Ascending aorta (tissue), 2 donors: ENCODE measurements at regions of chr2 and their contacts with region 1.

Region 1: DNA sequence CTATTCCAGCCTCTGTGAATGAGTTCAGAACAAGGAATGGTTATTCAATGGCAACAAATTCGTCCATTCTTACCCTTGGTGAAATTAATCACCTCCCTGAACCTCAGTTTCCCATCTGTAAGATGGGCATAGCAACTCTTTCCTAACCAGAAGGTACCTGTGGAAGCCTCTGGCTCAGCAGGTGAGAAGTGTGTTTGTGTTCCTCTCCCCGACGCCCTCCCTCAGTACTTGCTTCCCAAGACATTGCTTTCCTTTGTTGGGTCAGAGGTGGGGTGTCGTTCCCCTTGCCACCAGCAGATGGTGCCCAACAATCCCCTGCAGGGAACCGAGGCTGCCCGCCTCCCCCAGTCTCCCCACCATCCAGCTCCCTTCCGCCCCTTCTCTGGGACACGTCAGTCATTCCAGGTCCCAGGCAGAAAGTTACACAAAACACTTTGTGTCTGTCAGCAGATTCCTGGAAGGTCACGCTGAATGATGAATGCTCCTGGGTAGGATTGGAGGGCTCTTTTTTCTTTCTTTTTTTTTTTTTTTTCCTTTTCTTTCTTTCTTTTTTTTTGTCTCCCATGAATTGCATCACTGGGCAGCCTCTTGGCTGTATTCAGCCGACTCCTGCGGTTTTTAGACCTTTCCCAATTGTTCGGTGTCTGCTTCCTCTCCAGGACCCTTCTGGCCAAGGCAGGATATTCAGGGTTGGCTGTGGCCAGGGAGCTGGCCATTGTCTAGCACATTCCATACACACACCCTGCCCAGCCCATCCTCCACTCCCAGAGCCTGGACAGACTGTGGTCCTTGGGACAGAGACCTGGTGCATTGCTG is 117.3 kb downstream of the LPIN1 start:
- DNase-seq: peak; percentile 63 to 94
- H3K4me3 ChIP-seq: peak overlapping the region; percentile 7 to 39
- H3K27ac ChIP-seq: peak overlapping the region in 1 of 2 donors; percentile 43
- H3K4me1 ChIP-seq: peaks cover 0 to 6% of the 10 kb centered on the region in 2 donors
- H3K27me3 ChIP-seq: no peaks in the 10 kb centered on the region
- CTCF ChIP-seq: peak; percentile 82 to 93 (median 91)

Region 2: GRCh38 chr2:11505652-11506610 is 357.8 kb before region 1 on chr2:
- intact Hi-C with region 1: no loop called
- DNase-seq: no peak
- H3K4me3 ChIP-seq: no peak overlapping the region
- H3K27ac ChIP-seq: no peak overlapping the region
- H3K4me1 ChIP-seq: no peaks in the 10 kb centered on the region
- H3K27me3 ChIP-seq: no peaks in the 10 kb centered on the region
- CTCF ChIP-seq: no peak

Region 3: GRCh38 chr2:11829947-11830707 is 33.6 kb before region 1 on chr2:
- intact Hi-C with region 1: loop called (anchors 1 kb)
- DNase-seq: peak; percentile 24 to 82
- H3K4me3 ChIP-seq: peak overlapping the region; percentile 55
- H3K27ac ChIP-seq: peak overlapping the region; percentile 69 to 89
- H3K4me1 ChIP-seq: peaks cover 4 to 17% of the 10 kb centered on the region in 2 donors
- H3K27me3 ChIP-seq: no peaks in the 10 kb centered on the region
- CTCF ChIP-seq: peak in 1 of 3 experiments; percentile 35

Region 4: DNA sequence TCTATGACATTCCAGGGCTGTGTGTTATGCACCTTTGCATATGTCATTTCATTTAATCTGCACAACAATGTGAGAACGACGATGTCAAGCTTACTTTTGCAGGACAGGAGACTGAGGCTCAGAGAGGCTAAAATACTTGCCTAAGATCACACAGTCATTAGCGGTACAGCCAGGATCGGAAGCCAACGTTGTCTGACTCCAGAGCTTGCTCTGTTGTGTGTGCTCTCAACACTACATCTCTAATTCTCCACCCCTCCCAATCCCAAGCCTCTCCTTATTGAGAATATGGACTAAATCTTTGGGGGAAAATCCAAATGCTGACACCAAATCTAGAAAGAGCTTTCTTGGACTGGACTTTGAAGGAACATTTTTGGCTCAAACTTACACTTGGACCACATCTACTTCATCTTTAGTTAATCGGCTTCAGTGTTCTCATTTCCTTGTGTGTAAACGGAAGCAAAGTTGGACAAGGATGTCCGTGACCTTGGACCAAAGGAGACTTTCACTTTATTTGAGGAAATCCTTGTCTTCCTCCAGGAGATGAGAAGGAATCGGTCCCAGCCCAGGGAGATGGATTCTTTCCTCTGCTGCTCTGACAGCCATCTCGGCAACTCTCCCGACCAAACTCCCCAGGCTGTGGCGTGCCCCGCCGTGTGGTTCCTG is 125.1 kb after region 1 on chr2:
- intact Hi-C with region 1: no loop called
- DNase-seq: no peak
- H3K4me3 ChIP-seq: no peak overlapping the region
- H3K27ac ChIP-seq: no peak overlapping the region
- H3K4me1 ChIP-seq: no peaks in the 10 kb centered on the region
- H3K27me3 ChIP-seq: no peaks in the 10 kb centered on the region
- CTCF ChIP-seq: no peak

Region 5: DNA sequence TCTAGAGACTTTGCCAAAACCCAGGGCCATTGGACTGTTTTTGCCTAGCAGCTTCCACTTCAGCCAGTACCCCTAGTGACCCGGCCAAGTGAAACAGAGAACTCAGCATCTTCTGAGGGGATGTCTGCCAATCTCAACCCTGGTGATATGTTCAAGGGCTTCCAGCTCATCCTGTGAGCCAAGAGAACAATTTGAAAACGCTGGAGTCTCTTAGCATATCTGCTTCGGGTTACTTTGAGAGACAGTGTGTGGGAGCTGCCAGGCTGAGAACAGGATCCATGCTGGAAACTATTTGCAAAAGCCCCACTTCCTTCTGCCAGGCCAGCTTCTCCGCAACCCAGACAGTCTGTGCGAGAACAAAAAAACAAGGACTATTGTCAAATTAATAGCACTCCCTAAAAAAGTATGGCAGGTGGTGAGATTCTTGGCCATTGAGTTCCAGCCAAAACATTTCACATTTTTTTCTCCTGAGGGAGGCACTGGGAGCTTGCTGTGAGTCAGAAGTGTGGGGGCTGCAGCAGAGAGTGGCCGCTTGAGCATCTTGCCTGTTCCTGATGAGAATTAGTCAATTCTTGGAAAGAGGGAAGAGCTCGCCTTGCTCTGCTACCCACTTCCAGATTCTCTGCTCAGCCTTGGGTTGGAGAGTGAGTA is 457.4 kb after region 1 on chr2:
- intact Hi-C with region 1: loop called (anchors 10 kb)
- DNase-seq: peak in 1 of 2 donors; percentile 83
- H3K4me3 ChIP-seq: peak overlapping the region in 1 of 2 donors; percentile 25
- H3K27ac ChIP-seq: peak overlapping the region; percentile 76 to 87
- H3K4me1 ChIP-seq: peaks cover 3 to 15% of the 10 kb centered on the region in 2 donors
- H3K27me3 ChIP-seq: no peaks in the 10 kb centered on the region
- CTCF ChIP-seq: no peak

Region 6: GRCh38 chr2:12819103-12819475 is 955.4 kb after region 1 on chr2:
- intact Hi-C with region 1: loop called (anchors 2 kb)
- DNase-seq: peak; percentile 17 to 94
- H3K4me3 ChIP-seq: peak overlapping the region in 1 of 2 donors; percentile 33
- H3K27ac ChIP-seq: peak overlapping the region; percentile 78 to 83
- H3K4me1 ChIP-seq: peaks cover 6 to 10% of the 10 kb centered on the region in 2 donors
- H3K27me3 ChIP-seq: no peaks in the 10 kb centered on the region
- CTCF ChIP-seq: no peak

Region 7: GRCh38 chr2:12931186-12931844 is 1067.6 kb after region 1 on chr2:
- intact Hi-C with region 1: loop called (anchors 2 kb)
- DNase-seq: no peak
- H3K4me3 ChIP-seq: no peak overlapping the region
- H3K27ac ChIP-seq: no peak overlapping the region
- H3K4me1 ChIP-seq: no peaks in the 10 kb centered on the region
- H3K27me3 ChIP-seq: no peaks in the 10 kb centered on the region
- CTCF ChIP-seq: peak; percentile 65 to 94 (median 83)

Region 8: GRCh38 chr2:13006829-13007717 is 1143.4 kb after region 1 on chr2:
- intact Hi-C with region 1: loop called (anchors 1 kb)
- DNase-seq: peak in 1 of 2 donors; percentile 78
- H3K4me3 ChIP-seq: peak overlapping the region; percentile 3 to 9
- H3K27ac ChIP-seq: no peak overlapping the region
- H3K4me1 ChIP-seq: no peaks in the 10 kb centered on the region
- H3K27me3 ChIP-seq: no peaks in the 10 kb centered on the region
- CTCF ChIP-seq: peak; percentile 73 to 90 (median 79)